ENCODE measurements at regions of chr5 and their contacts with region 1.

Region 1: DNA sequence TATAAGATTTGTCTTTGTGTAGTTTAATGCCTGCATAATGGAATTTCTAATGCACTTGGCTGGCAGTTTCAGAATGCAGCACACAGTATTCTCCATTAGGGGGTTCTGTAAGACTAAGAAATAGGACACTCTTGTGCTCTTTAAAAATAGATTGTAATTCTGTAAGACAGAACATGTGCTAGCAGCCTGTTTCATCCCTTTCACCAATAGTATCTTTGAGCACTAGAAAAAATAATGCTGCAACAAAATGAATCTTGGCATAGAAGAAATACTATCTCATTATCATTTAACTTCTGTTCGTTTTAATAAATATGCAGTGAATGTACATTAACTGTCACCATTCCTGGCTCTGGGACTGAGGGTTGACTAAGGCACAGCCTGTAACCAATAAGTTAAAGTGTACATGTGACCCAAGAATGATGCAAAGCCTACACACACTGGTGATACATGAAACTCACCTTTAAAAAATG is 23.8 kb upstream of the ZNF622 start:
- DNase-seq: no peak
- ATAC-seq: peak; percentile 77 to 83
- H3K4me3 ChIP-seq: no peak overlapping the region
- H3K27ac ChIP-seq: no peak overlapping the region
- H3K4me1 ChIP-seq: no peaks in the 10 kb centered on the region
- H3K27me3 ChIP-seq: no peaks in the 10 kb centered on the region

Region 2: GRCh38 chr5:16540421-16540820 is 51.1 kb after region 1 on chr5:
- intact Hi-C with region 1: loop called in 1 of 4 experiments (anchors 10 kb)
- DNase-seq: no peak
- ATAC-seq: no peak
- H3K4me3 ChIP-seq: no peak overlapping the region
- H3K27ac ChIP-seq: peak overlapping the region; percentile 54
- H3K4me1 ChIP-seq: peaks cover 17% of the 10 kb centered on the region
- H3K27me3 ChIP-seq: no peaks in the 10 kb centered on the region

Region 3: DNA sequence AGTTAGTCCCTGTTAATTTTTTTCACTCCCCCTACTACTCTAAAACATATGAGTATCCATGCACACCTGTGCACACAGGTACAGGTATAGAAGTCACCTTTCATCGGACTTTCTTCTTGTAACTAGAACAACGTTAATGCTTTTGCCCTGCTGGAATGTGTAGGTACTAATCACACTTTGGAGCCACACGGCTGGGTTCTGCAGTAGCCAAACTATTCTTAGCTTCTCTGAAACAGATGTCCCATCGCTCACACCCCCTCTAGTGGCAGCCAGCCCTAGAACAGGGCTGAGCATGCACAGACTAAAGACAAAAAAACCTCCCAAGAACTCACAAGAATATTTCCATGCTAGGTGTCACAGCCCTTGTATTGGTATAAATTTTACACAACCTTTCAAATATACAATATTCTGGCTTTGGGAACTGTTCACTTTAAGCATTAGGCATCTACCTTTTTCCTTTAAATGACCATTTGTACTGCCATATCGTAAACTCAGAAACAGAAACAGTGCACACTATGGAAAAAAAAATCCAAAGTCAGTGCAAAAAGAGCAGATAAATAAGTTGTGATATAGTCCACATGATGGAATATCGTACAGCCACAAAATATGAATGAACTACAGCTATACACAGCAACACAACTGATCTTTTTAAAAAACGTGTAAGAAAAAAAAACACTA is 63.4 kb after region 1 on chr5:
- intact Hi-C with region 1: loop called in 3 of 4 experiments (anchors 5 to 10 kb)
- DNase-seq: peak; percentile 74 to 92 (median 85)
- ATAC-seq: peak; percentile 86 to 90
- H3K4me3 ChIP-seq: no peak overlapping the region
- H3K27ac ChIP-seq: no peak overlapping the region
- H3K4me1 ChIP-seq: no peaks in the 10 kb centered on the region
- H3K27me3 ChIP-seq: no peaks in the 10 kb centered on the region

Region 4: GRCh38 chr5:16666883-16667398 is 177.6 kb after region 1 on chr5:
- intact Hi-C with region 1: loop called in 3 of 4 experiments (anchors 2 to 10 kb)
- DNase-seq: peak; percentile 59 to 87 (median 84)
- ATAC-seq: peak; percentile 86
- H3K4me3 ChIP-seq: no peak overlapping the region
- H3K27ac ChIP-seq: peak overlapping the region; percentile 5
- H3K4me1 ChIP-seq: peaks cover 11% of the 10 kb centered on the region
- H3K27me3 ChIP-seq: no peaks in the 10 kb centered on the region

Region 5: GRCh38 chr5:16776611-16777251 is 287.4 kb after region 1 on chr5:
- intact Hi-C with region 1: loop called in 1 of 4 experiments (anchors 10 kb)
- DNase-seq: peak in 2 of 3 donors; percentile 23 to 68
- ATAC-seq: peak; percentile 84
- H3K4me3 ChIP-seq: no peak overlapping the region
- H3K27ac ChIP-seq: no peak overlapping the region
- H3K4me1 ChIP-seq: no peaks in the 10 kb centered on the region
- H3K27me3 ChIP-seq: no peaks in the 10 kb centered on the region

Region 6: DNA sequence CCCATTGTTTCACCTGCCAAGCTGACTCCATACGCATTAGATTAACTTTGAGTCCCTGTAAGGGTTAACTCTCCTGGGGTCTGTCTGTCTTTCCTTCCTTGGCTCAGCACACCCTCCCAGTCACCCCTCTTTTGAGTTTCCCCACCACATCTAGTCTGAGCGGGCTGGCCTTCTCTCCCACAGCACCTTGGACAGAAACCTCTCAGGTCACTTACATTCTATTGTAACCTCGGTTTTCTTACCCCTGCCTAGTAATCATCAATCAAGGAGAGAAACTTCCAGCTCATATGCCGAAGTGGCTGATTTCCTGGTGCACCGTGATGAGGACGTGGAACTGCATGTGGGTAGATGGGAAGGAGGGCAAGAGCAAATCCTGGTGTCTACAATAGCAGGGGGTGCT is 344.7 kb after region 1 on chr5:
- intact Hi-C with region 1: no loop called
- DNase-seq: no peak
- ATAC-seq: no peak
- H3K4me3 ChIP-seq: no peak overlapping the region
- H3K27ac ChIP-seq: no peak overlapping the region
- H3K4me1 ChIP-seq: no peaks in the 10 kb centered on the region
- H3K27me3 ChIP-seq: no peaks in the 10 kb centered on the region

Region 7: GRCh38 chr5:17204133-17204489 is 714.8 kb after region 1 on chr5:
- intact Hi-C with region 1: loop called in 1 of 4 experiments (anchors 10 kb)
- DNase-seq: no peak
- ATAC-seq: no peak
- H3K4me3 ChIP-seq: no peak overlapping the region
- H3K27ac ChIP-seq: no peak overlapping the region
- H3K4me1 ChIP-seq: no peaks in the 10 kb centered on the region
- H3K27me3 ChIP-seq: peaks cover 3% of the 10 kb centered on the region

Measured in right cardiac atrium (tissue), 5 donors.